ENCODE measurements at regions of chr3 and their contacts with region 1.

Region 1: GRCh38 chr3:87350364-87351199 is 74.2 kb upstream of the POU1F1 start:
- DNase-seq: no peak
- H3K4me3 ChIP-seq: no peak overlapping the region
- H3K27ac ChIP-seq: no peak overlapping the region
- H3K4me1 ChIP-seq: peaks cover 0 to 6% (median 0%) of the 10 kb centered on the region in 6 donors
- H3K27me3 ChIP-seq: no peaks in the 10 kb centered on the region
- CTCF ChIP-seq: peak; percentile 36 to 87 (median 73)
- POLR2A ChIP-seq: no peak

Region 2: GRCh38 chr3:87272718-87273341 is 77.8 kb before region 1 on chr3:
- intact Hi-C with region 1: no loop called
- DNase-seq: no peak
- H3K4me3 ChIP-seq: no peak overlapping the region
- H3K27ac ChIP-seq: no peak overlapping the region
- H3K4me1 ChIP-seq: peaks cover 0 to 41% (median 16%) of the 10 kb centered on the region in 6 donors
- H3K27me3 ChIP-seq: no peaks in the 10 kb centered on the region
- CTCF ChIP-seq: no peak
- POLR2A ChIP-seq: no peak

Region 3: GRCh38 chr3:88003115-88003755 is 652.7 kb after region 1 on chr3:
- intact Hi-C with region 1: loop called (anchors 5 kb)
- DNase-seq: no peak
- H3K4me3 ChIP-seq: no peak overlapping the region
- H3K27ac ChIP-seq: no peak overlapping the region
- H3K4me1 ChIP-seq: peaks cover 0 to 32% (median 8%) of the 10 kb centered on the region in 6 donors
- H3K27me3 ChIP-seq: no peaks in the 10 kb centered on the region
- CTCF ChIP-seq: peak in 10 of 11 experiments; percentile 38 to 74 (median 67)
- POLR2A ChIP-seq: no peak

Measured in spleen (tissue), 13 donors.